ENCODE measurements at regions of chr15 and their contacts with region 1.

Region 1: GRCh38 chr15:40782580-40783227 is 12.9 kb downstream of the C15orf62 start:
- DNase-seq: peak; percentile 74 to 88
- ATAC-seq: peak; percentile 93 to 98 (median 97)
- H3K4me3 ChIP-seq: no peak overlapping the region
- H3K4me3 Mint-ChIP-seq: no peak overlapping the region
- H3K27ac ChIP-seq: no peak overlapping the region
- H3K27ac Mint-ChIP-seq: peak overlapping the region in 1 of 2 donors; percentile 46
- H3K4me1 ChIP-seq: peaks cover 29% of the 10 kb centered on the region
- H3K4me1 Mint-ChIP-seq: peaks cover 33 to 36% of the 10 kb centered on the region in 2 donors
- H3K27me3 ChIP-seq: no peaks in the 10 kb centered on the region
- H3K27me3 Mint-ChIP-seq: no peaks in the 10 kb centered on the region
- CTCF ChIP-seq: peak; percentile 77

Region 2: DNA sequence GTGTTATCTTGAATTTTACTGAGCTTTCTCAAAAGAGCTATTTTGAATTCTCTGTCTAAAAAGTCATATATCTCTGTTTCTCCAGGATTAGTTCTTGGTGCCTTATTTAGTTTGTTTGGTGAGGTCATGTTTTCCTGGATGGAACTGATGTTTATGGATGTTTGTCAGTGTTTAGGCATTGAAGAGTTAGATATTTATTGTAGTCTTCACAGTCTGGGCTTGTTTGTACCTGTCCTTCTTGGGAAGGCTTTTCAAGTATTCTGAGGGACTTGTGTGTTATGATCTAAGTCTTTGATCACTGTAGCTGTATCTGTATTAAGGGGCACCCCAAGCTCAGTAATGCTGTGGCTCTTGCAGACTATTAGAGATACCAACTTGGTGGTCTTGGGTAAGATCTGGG is 98.3 kb before region 1 on chr15:
- intact Hi-C with region 1: loop called (anchors 2 kb)
- DNase-seq: no peak
- ATAC-seq: no peak
- H3K4me3 ChIP-seq: no peak overlapping the region
- H3K4me3 Mint-ChIP-seq: no peak overlapping the region
- H3K27ac ChIP-seq: no peak overlapping the region
- H3K27ac Mint-ChIP-seq: no peak overlapping the region
- H3K4me1 ChIP-seq: no peaks in the 10 kb centered on the region
- H3K4me1 Mint-ChIP-seq: no peaks in the 10 kb centered on the region
- H3K27me3 ChIP-seq: no peaks in the 10 kb centered on the region
- H3K27me3 Mint-ChIP-seq: no peaks in the 10 kb centered on the region
- CTCF ChIP-seq: no peak

Region 3: DNA sequence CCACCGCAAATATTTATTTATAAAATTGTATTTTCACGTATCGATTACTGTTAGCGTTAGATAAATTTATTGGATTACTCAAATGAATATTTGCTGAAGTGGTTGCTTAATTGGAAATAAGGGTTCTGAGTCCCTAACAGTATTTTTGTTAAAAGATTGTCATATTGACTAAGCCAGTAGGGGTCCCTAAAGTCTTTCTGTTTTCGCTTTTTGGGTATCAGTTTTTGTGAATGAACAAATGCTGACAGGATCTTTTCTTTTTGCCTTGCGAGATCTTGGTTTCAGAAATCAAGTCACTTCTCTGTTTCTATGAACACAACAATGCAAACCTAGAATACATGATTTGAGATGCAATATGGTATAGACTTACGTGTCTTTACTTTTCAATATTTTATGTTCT is 80.6 kb before region 1 on chr15:
- intact Hi-C with region 1: loop called (anchors 1 kb)
- DNase-seq: peak in 1 of 2 donors; percentile 54
- ATAC-seq: peak in 2 of 3 donors; percentile 61 to 68
- H3K4me3 ChIP-seq: no peak overlapping the region
- H3K4me3 Mint-ChIP-seq: no peak overlapping the region
- H3K27ac ChIP-seq: no peak overlapping the region
- H3K27ac Mint-ChIP-seq: no peak overlapping the region
- H3K4me1 ChIP-seq: no peaks in the 10 kb centered on the region
- H3K4me1 Mint-ChIP-seq: no peaks in the 10 kb centered on the region
- H3K27me3 ChIP-seq: no peaks in the 10 kb centered on the region
- H3K27me3 Mint-ChIP-seq: no peaks in the 10 kb centered on the region
- CTCF ChIP-seq: peak; percentile 55

Measured in natural killer cell (primary cell).